Activated CD4-positive, alpha-beta memory T cell treated with anti-CD3 and anti-CD28 coated beads, Interleukin-2, amount 10 ng/mL, durations not matched to agents 7 days and 5 days (primary cell): ENCODE measurements at regions of chr3 and their contacts with region 1.

Region 1: DNA sequence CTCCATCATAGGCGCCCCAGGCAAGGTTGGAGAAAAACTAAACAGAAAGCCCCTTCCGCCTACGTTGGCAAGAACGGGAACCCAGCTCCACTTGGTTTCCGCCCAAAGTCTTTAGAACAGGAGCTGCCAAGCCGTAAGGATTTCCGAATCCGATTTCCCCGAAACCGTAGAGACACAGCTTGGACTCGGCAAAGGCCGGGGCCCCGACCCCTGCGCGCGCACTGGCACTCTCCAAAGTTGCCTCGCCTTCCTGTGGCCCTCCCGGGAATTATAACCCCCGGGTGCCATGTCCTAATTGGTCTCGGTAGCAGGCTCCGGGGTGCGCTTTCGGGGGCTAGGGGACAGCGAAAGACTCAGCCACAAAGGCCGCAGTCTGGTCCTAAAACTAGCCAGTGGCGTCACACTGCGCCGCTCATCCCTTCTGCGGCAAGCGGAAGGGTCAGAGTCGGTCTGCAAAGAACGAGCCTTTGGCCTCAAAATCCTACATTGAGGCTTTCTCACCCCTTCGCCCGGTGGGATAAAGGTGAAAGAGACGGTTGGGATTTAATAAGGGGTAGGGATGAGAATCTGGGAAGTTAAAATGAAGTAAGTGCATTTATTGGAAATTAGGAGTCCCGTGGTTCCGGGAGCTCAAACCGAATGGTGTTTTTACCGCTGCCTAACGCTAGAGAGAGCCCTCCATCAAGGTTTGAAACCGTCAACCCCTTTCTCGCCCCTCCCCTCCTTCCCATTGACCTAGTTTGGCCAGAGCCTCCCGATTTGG is 6.8 kb downstream of the BCL6 start:
- DNase-seq: peak; percentile 77
- H3K4me3 Mint-ChIP-seq: peak overlapping the region; percentile 89
- H3K27ac Mint-ChIP-seq: peak overlapping the region; percentile 99
- H3K4me1 Mint-ChIP-seq: peaks cover 48% of the 10 kb centered on the region
- H3K27me3 Mint-ChIP-seq: peaks cover 3% of the 10 kb centered on the region

Region 2: GRCh38 chr3:187974871-187975271 is 236.4 kb after region 1 on chr3:
- CTCF ChIA-PET with region 1: interaction called, 42 read pairs
- POLR2A ChIA-PET with region 1: interaction called, 21 read pairs
- DNase-seq: no peak
- H3K4me3 Mint-ChIP-seq: peak overlapping the region; percentile 37
- H3K27ac Mint-ChIP-seq: peak overlapping the region; percentile 87
- H3K4me1 Mint-ChIP-seq: peaks cover 64% of the 10 kb centered on the region
- H3K27me3 Mint-ChIP-seq: no peaks in the 10 kb centered on the region

Region 3: DNA sequence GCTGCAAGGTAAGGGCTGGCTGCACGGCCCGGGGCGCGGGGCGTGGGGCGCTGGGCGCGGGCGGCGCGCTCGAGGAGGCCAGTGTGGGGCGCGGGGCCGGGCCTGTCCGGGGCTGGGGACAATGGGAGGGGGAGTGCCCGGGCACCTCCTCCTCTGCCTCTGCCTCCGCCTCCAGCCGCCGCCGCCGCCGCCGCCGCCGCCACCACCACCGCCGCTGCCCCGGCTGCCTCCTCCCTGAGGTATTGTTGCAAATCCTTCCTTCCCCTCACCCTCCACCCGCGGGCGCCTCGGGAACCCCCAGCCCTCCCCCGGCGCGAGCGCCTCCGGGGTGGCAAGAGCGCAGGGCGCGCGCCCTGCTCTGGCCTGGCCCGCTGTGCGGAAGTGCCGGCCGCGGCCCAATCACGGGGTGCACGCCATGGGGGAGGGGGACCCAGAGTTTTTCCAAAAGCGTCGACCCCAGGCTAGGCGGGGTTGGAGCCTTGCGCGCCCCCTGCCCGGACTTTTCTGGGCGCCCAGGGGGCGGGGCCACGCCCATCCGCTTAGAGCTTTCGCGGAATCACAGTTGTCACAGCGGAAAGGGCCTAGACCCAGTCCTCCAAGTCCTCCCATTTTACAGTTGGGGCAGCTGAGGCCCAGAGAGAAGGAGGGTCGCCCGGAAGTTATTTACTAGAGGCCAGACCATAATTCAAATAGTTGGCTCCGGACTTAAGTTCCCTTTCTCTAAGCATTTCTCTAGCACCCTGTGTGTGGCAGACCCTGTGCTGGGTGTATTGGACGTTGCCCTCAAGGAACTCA is 415.7 kb after region 1 on chr3 and contains the start of gene LPP:
- CTCF ChIA-PET with region 1: interaction called, 51 read pairs
- POLR2A ChIA-PET with region 1: interaction called, 136 read pairs
- DNase-seq: peak; percentile 90
- H3K4me3 Mint-ChIP-seq: peak within 1 kb of the TSS; percentile 93
- H3K27ac Mint-ChIP-seq: peak within 1 kb of the TSS; percentile 95
- H3K4me1 Mint-ChIP-seq: peaks cover 61% of the 10 kb centered on the region
- H3K27me3 Mint-ChIP-seq: no peaks in the 10 kb centered on the region
- total RNA-seq, gene LPP: 51.4 to 52.4 TPM

Region 4: GRCh38 chr3:188316021-188316722 is 577.7 kb after region 1 on chr3:
- CTCF ChIA-PET with region 1: interaction called, 10 read pairs
- POLR2A ChIA-PET with region 1: no interaction called
- DNase-seq: no peak
- H3K4me3 Mint-ChIP-seq: no peak overlapping the region
- H3K27ac Mint-ChIP-seq: no peak overlapping the region
- H3K4me1 Mint-ChIP-seq: peaks cover 4% of the 10 kb centered on the region
- H3K27me3 Mint-ChIP-seq: peaks cover 12% of the 10 kb centered on the region

Region 5: GRCh38 chr3:188749010-188749617 is 1010.6 kb after region 1 on chr3:
- CTCF ChIA-PET with region 1: interaction called, 43 read pairs
- POLR2A ChIA-PET with region 1: interaction called, 10 read pairs
- DNase-seq: peak; percentile 55
- H3K4me3 Mint-ChIP-seq: no peak overlapping the region
- H3K27ac Mint-ChIP-seq: no peak overlapping the region
- H3K4me1 Mint-ChIP-seq: peaks cover 12% of the 10 kb centered on the region
- H3K27me3 Mint-ChIP-seq: no peaks in the 10 kb centered on the region

Region 6: DNA sequence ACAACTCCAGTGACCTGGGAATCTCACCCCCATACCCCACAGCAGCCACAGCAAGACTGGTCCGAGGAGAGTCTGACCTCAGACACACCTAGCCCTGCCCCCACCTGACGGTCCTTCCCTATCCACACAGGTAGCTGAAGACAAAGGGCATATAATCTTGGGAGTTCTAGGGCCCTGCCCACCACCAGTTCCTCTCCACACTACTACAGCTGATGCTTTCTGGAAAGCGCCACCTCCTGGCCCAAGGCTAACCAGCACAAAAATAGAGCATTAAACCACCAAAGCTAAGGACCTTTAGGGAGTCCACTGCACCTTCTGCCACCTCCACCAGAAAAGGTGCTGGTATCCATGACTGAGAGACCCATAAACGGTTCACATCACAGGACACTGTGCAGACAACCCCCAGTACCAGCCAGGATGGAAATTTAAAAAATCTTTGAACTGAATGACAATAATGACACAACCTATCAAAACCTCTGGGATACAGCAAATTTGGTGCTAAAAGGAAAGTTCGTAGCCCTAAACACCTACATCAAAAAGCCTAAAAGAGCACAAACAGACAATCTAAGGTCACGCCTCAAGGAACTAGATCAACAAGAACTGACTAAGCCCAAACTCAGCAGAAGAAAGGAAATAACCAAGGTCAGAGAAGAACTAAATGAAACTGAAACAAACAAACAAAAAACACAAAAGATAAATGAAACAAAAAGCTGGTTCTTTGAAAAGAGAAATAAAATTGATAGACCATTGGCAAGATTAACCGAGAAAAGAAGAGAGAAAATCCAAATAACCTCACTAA is 1311.1 kb after region 1 on chr3:
- CTCF ChIA-PET with region 1: interaction called, 19 read pairs
- POLR2A ChIA-PET with region 1: interaction called, 8 read pairs
- DNase-seq: peak; percentile 53
- H3K4me3 Mint-ChIP-seq: peak overlapping the region; percentile 37
- H3K27ac Mint-ChIP-seq: peak overlapping the region; percentile 96
- H3K4me1 Mint-ChIP-seq: peaks cover 50% of the 10 kb centered on the region
- H3K27me3 Mint-ChIP-seq: no peaks in the 10 kb centered on the region